ENCODE measurements at regions of chr3 and their contacts with region 1.

Region 1: GRCh38 chr3:120245386-120245785 is 39.6 kb downstream of the GPR156 start:
- DNase-seq: no peak
- ATAC-seq: no peak
- H3K4me3 ChIP-seq: no peak overlapping the region
- H3K27ac ChIP-seq: no peak overlapping the region
- H3K4me1 ChIP-seq: no peaks in the 10 kb centered on the region
- H3K27me3 ChIP-seq: no peaks in the 10 kb centered on the region
- CTCF ChIP-seq: no peak
- POLR2A ChIP-seq: no peak

Region 2: DNA sequence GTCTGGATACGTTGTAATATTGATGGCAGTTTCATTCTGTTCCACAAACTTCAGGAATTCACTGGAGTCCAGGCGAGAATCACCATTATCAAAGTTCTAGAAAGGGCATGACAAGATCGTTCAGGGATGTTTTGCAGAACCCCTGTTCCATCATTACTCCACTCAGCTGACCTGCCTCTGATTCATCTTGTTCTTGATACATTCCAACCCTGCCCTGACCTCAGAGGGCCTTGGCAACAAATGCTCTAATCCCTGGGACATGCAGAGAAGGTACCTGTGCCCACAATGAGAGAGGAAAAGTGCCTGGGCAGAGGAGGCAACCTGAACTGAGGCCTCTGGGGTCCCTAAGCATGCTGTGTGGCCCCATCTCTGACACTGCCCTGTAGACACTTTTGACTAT is 159.5 kb after region 1 on chr3:
- in situ Hi-C with region 1: loop called (anchors 5 to 10 kb)
- intact Hi-C with region 1: no loop called
- DNase-seq: no peak
- ATAC-seq: no peak
- H3K4me3 ChIP-seq: no peak overlapping the region
- H3K27ac ChIP-seq: no peak overlapping the region
- H3K4me1 ChIP-seq: no peaks in the 10 kb centered on the region
- H3K27me3 ChIP-seq: no peaks in the 10 kb centered on the region
- CTCF ChIP-seq: no peak
- POLR2A ChIP-seq: no peak

Region 3: GRCh38 chr3:120506828-120507774 is 261.7 kb after region 1 on chr3:
- in situ Hi-C with region 1: loop called in 1 of 4 experiments (anchors 10 kb)
- intact Hi-C with region 1: no loop called
- DNase-seq: peak in 1 of 2 donors; percentile 15
- ATAC-seq: peak in 1 of 2 donors; percentile 52
- H3K4me3 ChIP-seq: no peak overlapping the region
- H3K27ac ChIP-seq: no peak overlapping the region
- H3K4me1 ChIP-seq: peaks cover 0 to 3% of the 10 kb centered on the region in 2 donors
- H3K27me3 ChIP-seq: no peaks in the 10 kb centered on the region
- CTCF ChIP-seq: peak in 4 of 5 experiments; percentile 37 to 58 (median 48)
- POLR2A ChIP-seq: no peak